T-cell (primary cell): ENCODE measurements at regions of chr11 and their contacts with region 1.

Region 1: DNA sequence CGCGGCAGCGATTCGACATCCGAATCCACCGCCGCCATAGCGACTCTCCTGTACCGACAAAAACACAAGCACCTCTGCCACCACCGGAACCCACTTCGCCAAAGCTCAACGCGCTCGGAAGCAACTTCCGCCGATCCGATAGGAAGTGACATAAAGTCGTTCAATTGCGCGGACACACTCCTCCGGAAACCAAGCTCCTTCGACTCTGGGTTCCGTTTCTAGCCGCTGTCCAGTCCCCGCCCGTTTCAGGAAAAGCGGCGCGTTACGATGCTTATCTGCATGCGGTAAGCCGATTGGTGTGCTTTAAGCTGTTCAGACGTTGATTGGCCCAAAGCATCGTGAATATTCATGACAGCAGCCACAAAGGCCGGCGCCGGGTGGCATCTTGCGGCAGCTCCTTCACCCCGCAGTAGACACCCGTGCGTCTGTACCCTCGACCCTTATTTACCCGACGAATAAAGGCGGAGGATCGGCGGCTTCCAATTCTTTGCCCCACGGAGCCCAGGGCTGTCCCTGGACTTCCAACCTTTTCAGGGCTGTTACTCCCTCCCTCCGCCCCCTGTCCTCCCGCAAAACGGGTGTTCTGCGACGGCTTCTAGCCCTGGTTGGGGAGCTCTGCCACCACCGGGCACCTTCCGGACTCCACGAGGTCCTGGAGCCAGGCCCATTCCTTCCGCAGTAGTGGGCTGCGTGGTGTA is at the start of gene TUT1:
- DNase-seq: peak; percentile 91 to 99 (median 96)
- ATAC-seq: peak; percentile 85 to 91 (median 88)
- H3K4me3 ChIP-seq: peak within 1 kb of the TSS; percentile 90 to 93
- H3K4me3 Mint-ChIP-seq: peak within 1 kb of the TSS; percentile 96 to 99 (median 97)
- H3K27ac ChIP-seq: peak within 1 kb of the TSS; percentile 92
- H3K27ac Mint-ChIP-seq: peak within 1 kb of the TSS; percentile 98 to 99
- H3K4me1 ChIP-seq: peaks cover 15 to 48% of the 10 kb centered on the region in 2 experiments
- H3K4me1 Mint-ChIP-seq: peaks cover 44 to 57% (median 55%) of the 10 kb centered on the region in 3 donors
- H3K27me3 ChIP-seq: no peaks in the 10 kb centered on the region
- H3K27me3 Mint-ChIP-seq: no peaks in the 10 kb centered on the region
- total RNA-seq, gene TUT1: 35.2 to 56.0 (median 42.9) TPM

Region 2: GRCh38 chr11:62542750-62543567 is 48.6 kb before region 1 on chr11:
- CTCF ChIA-PET with region 1: interaction called in 1 of 2 experiments, 14 read pairs
- POLR2A ChIA-PET with region 1: interaction called in 1 of 2 experiments, 7 read pairs
- DNase-seq: peak; percentile 39 to 81 (median 62)
- ATAC-seq: peak; percentile 36 to 59 (median 42)
- H3K4me3 ChIP-seq: peak overlapping the region in 1 of 2 donors; percentile 95
- H3K4me3 Mint-ChIP-seq: peak overlapping the region; percentile 91 to 96 (median 92)
- H3K27ac ChIP-seq: peak overlapping the region; percentile 95
- H3K27ac Mint-ChIP-seq: peak overlapping the region; percentile 84 to 85
- H3K4me1 ChIP-seq: peaks cover 14 to 92% of the 10 kb centered on the region in 2 experiments
- H3K4me1 Mint-ChIP-seq: peaks cover 65 to 77% (median 75%) of the 10 kb centered on the region in 3 donors
- H3K27me3 ChIP-seq: no peaks in the 10 kb centered on the region
- H3K27me3 Mint-ChIP-seq: no peaks in the 10 kb centered on the region

Region 3: GRCh38 chr11:62573592-62574362 is 17.8 kb before region 1 on chr11 and contains the start of gene EEF1G:
- CTCF ChIA-PET with region 1: interaction called in 1 of 2 experiments, 27 read pairs
- POLR2A ChIA-PET with region 1: interaction called in 1 of 2 experiments, 28 read pairs
- DNase-seq: peak; percentile 91 to 100 (median 98)
- ATAC-seq: peak; percentile 93 to 96 (median 94)
- H3K4me3 ChIP-seq: peak within 1 kb of the TSS; percentile 88 to 92
- H3K4me3 Mint-ChIP-seq: peak within 1 kb of the TSS; percentile 95 to 97 (median 97)
- H3K27ac ChIP-seq: peak within 1 kb of the TSS; percentile 76
- H3K27ac Mint-ChIP-seq: peak within 1 kb of the TSS; percentile 91 to 97
- H3K4me1 ChIP-seq: peaks cover 11 to 43% of the 10 kb centered on the region in 2 experiments
- H3K4me1 Mint-ChIP-seq: peaks cover 55 to 56% (median 56%) of the 10 kb centered on the region in 3 donors
- H3K27me3 ChIP-seq: no peaks in the 10 kb centered on the region
- H3K27me3 Mint-ChIP-seq: no peaks in the 10 kb centered on the region
- total RNA-seq, gene EEF1G: 1,908 to 2,187 (median 2,119) TPM

Region 4: DNA sequence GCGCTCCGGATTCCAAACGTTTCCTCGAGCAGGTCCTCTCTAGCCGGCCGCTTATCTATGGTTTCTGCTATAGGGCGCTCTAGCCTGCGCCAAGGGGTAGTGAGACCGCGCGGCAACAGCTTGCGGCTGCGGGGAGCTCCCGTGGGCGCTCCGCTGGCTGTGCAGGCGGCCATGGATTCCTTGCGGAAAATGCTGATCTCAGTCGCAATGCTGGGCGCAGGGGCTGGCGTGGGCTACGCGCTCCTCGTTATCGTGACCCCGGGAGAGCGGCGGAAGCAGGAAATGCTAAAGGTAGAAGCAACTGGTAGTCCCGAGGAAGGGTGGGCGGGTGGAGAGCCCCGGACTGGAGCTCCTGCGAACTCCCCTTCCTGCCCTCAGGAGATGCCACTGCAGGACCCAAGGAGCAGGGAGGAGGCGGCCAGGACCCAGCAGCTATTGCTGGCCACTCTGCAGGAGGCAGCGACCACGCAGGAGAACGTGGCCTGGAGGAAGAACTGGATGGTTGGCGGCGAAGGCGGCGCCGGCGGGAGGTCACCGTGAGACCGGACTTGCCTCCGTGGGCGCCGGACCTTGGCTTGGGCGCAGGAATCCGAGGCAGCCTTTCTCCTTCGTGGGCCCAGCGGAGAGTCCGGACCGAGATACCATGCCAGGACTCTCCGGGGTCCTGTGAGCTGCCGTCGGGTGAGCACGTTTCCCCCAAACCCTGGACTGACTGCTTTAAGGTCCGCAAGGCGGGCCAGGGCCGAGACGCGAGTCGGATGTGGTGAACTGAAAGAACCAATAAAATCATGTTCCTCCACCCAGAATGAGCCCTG is 80.2 kb after region 1 on chr11 and contains the starts of genes LBHD1 and UQCC3:
- CTCF ChIA-PET with region 1: interaction called in 1 of 2 experiments, 7 read pairs
- POLR2A ChIA-PET with region 1: interaction called, 5 to 11 read pairs
- DNase-seq: peak; percentile 32 to 81 (median 60)
- ATAC-seq: peak; percentile 72 to 80 (median 78)
- H3K4me3 ChIP-seq: peak within 1 kb of the TSS; percentile 82 to 96
- H3K4me3 Mint-ChIP-seq: peak within 1 kb of the TSS; percentile 98 to 99 (median 99)
- H3K27ac ChIP-seq: peak within 1 kb of the TSS; percentile 65
- H3K27ac Mint-ChIP-seq: peak within 1 kb of the TSS; percentile 98 to 99
- H3K4me1 ChIP-seq: peaks cover 7 to 45% of the 10 kb centered on the region in 2 experiments
- H3K4me1 Mint-ChIP-seq: peaks cover 57 to 62% (median 59%) of the 10 kb centered on the region in 3 donors
- H3K27me3 ChIP-seq: no peaks in the 10 kb centered on the region
- H3K27me3 Mint-ChIP-seq: no peaks in the 10 kb centered on the region
- total RNA-seq, gene LBHD1: 15.5 to 24.7 (median 20.7) TPM
- total RNA-seq, gene UQCC3: 2.7 to 9.3 (median 8.1) TPM

Region 5: GRCh38 chr11:62705880-62706849 is 114.6 kb after region 1 on chr11:
- CTCF ChIA-PET with region 1: interaction called in 1 of 2 experiments, 10 read pairs
- POLR2A ChIA-PET with region 1: interaction called, 4 to 8 read pairs
- DNase-seq: peak; percentile 82 to 96 (median 91)
- ATAC-seq: peak; percentile 69 to 75 (median 73)
- H3K4me3 ChIP-seq: peak overlapping the region; percentile 59 to 62
- H3K4me3 Mint-ChIP-seq: peak overlapping the region; percentile 85 to 97 (median 87)
- H3K27ac ChIP-seq: peak overlapping the region; percentile 83
- H3K27ac Mint-ChIP-seq: peak overlapping the region; percentile 82 to 84
- H3K4me1 ChIP-seq: peaks cover 19 to 48% of the 10 kb centered on the region in 2 experiments
- H3K4me1 Mint-ChIP-seq: peaks cover 43 to 51% (median 47%) of the 10 kb centered on the region in 3 donors
- H3K27me3 ChIP-seq: no peaks in the 10 kb centered on the region
- H3K27me3 Mint-ChIP-seq: no peaks in the 10 kb centered on the region

Region 6: GRCh38 chr11:62880803-62881578 is 289.4 kb after region 1 on chr11 and contains the start of gene SLC3A2:
- CTCF ChIA-PET with region 1: interaction called in 1 of 2 experiments, 13 read pairs
- POLR2A ChIA-PET with region 1: interaction called in 1 of 2 experiments, 3 read pairs
- DNase-seq: peak; percentile 71 to 93 (median 83)
- ATAC-seq: peak; percentile 80 to 83 (median 82)
- H3K4me3 ChIP-seq: peak within 1 kb of the TSS; percentile 94 to 97
- H3K4me3 Mint-ChIP-seq: peak within 1 kb of the TSS; percentile 97 to 100 (median 100)
- H3K27ac ChIP-seq: peak within 1 kb of the TSS; percentile 98
- H3K27ac Mint-ChIP-seq: peak within 1 kb of the TSS; percentile 100
- H3K4me1 ChIP-seq: peaks cover 12 to 48% of the 10 kb centered on the region in 2 experiments
- H3K4me1 Mint-ChIP-seq: peaks cover 46 to 55% (median 50%) of the 10 kb centered on the region in 3 donors
- H3K27me3 ChIP-seq: no peaks in the 10 kb centered on the region
- H3K27me3 Mint-ChIP-seq: no peaks in the 10 kb centered on the region
- total RNA-seq, gene SLC3A2: 178 to 248 (median 237) TPM